ENCODE measurements at regions of chr5 and their contacts with region 1.

Region 1: DNA sequence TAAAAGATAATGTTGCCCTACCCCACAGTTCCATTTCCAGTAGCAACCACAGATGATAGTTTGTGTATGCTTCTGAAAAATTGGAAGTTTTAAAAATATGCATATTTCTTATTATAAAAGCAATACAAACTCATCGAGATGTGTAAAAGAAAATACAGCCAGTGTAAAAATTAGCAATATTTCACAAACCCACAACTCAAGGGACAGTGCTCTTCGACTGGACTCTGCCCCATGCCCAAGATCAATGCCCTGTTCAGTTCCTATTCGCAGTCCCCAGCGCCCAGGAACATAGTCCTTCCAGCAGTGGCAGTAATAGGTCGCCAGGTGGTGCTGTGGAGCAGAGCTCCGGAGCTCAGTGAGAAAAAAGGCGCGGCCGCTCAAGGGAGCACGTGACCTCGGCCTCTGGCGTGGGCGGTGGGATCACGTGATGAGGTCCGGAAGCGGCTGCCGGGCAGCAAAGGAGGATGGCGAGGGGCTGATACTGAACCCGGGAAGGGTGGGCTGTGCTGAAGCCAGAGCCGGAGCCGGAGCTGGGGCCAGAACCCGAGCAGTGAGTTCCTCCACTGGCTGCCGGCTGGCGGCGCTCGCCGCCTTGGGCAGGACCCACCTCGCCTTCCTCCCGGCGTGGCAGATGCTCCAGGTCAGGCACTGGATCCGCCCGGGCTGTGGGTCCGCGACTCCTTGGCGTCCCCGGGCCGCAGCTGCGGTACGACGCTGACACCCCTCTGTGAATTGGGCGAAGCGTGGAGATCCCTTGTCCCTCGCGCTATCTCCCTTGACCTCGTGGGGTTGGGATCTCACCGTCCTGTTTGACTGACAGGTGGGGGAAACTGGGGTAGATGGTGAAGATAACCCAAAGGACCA is at the start of gene SLC36A1:
- DNase-seq: peak; percentile 88
- H3K4me3 Mint-ChIP-seq: peak within 1 kb of the TSS; percentile 85
- H3K27ac Mint-ChIP-seq: peak within 1 kb of the TSS; percentile 83
- H3K4me1 Mint-ChIP-seq: peaks cover 29% of the 10 kb centered on the region
- H3K27me3 Mint-ChIP-seq: peaks cover 38% of the 10 kb centered on the region
- total RNA-seq, gene SLC36A1: 6.0 and 6.2 TPM in 2 replicates

Region 2: DNA sequence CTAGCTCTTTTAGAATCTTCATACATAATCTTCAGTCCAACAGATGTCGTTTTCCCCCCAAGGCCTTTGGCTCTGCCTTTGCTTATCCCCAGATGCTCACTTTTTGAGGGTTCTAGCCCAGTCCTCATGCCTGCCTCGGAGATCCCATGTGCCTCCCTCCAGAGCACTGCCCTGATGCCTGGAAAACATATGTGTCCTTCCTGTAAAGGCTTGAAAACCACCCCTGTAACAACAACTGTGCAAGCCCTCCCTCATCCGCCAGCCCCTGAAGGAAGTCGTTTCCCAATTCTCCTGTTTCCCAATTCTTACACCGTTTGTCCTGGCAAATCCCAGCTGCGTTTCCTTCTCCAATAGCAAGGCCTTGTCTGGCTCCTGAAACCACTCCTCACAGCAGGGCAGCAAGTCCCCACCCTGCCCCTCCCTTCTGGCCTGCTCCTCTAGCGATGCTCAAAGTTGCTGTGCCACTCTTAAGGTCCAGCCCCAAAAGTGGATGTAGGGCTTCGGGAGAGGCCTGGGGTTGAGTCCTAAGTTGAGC is 52.2 kb after region 1 on chr5:
- intact Hi-C with region 1: loop called (anchors 1 kb)
- DNase-seq: no peak
- H3K4me3 Mint-ChIP-seq: no peak overlapping the region
- H3K27ac Mint-ChIP-seq: no peak overlapping the region
- H3K4me1 Mint-ChIP-seq: no peaks in the 10 kb centered on the region
- H3K27me3 Mint-ChIP-seq: no peaks in the 10 kb centered on the region

Region 3: GRCh38 chr5:151523335-151523734 is 75.9 kb after region 1 on chr5:
- intact Hi-C with region 1: loop called (anchors 1 kb)
- DNase-seq: peak; percentile 26
- H3K4me3 Mint-ChIP-seq: no peak overlapping the region
- H3K27ac Mint-ChIP-seq: no peak overlapping the region
- H3K4me1 Mint-ChIP-seq: no peaks in the 10 kb centered on the region
- H3K27me3 Mint-ChIP-seq: no peaks in the 10 kb centered on the region

Region 4: GRCh38 chr5:151651997-151652645 is 204.7 kb after region 1 on chr5:
- intact Hi-C with region 1: loop called (anchors 1 kb)
- DNase-seq: peak; percentile 36
- H3K4me3 Mint-ChIP-seq: no peak overlapping the region
- H3K27ac Mint-ChIP-seq: no peak overlapping the region
- H3K4me1 Mint-ChIP-seq: no peaks in the 10 kb centered on the region
- H3K27me3 Mint-ChIP-seq: peaks cover 9% of the 10 kb centered on the region

Region 5: GRCh38 chr5:151740336-151740942 is 293.0 kb after region 1 on chr5:
- intact Hi-C with region 1: loop called (anchors 5 kb)
- DNase-seq: peak; percentile 26
- H3K4me3 Mint-ChIP-seq: no peak overlapping the region
- H3K27ac Mint-ChIP-seq: no peak overlapping the region
- H3K4me1 Mint-ChIP-seq: peaks cover 16% of the 10 kb centered on the region
- H3K27me3 Mint-ChIP-seq: no peaks in the 10 kb centered on the region